ENCODE measurements at regions of chr12 and their contacts with region 1.

Region 1: GRCh38 chr12:14314801-14315200 is 50.7 kb upstream of the ATF7IP start:
- DNase-seq: no peak
- ATAC-seq: peak; percentile 69
- H3K4me3 Mint-ChIP-seq: peak overlapping the region; percentile 56
- H3K27ac Mint-ChIP-seq: peak overlapping the region; percentile 71
- H3K4me1 Mint-ChIP-seq: peaks cover 31% of the 10 kb centered on the region
- H3K27me3 Mint-ChIP-seq: no peaks in the 10 kb centered on the region
- CTCF ChIP-seq: no peak

Region 2: DNA sequence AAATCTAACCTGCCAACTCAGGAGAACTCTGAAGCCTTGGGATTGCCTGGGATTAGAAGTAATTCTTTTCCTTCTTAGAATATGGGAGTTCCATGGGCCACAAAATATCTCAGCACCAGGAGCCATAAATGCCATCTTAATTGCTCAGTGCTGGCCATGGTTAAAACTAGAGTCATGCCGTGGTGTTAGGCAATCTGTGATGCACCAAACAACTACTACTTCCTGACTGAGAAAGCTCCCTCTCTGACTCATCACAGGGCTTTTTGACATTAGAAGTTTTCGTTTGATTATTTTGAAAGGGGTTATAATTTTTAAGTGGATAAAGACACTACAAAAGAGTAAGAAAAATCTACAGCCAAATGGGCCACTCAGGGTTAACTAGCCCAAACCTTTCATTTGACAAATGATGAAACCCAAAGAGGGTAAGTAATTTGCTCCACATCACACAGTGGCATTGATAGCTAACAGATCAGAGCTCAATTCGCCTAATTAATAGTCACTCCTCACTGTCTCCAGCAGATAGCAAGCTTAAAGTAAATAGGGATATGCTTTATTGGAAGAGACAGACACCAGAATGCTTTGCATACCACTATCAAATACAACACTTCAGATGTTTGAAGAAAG is 741.0 kb before region 1 on chr12:
- CTCF ChIA-PET with region 1: no interaction called
- POLR2A ChIA-PET with region 1: no interaction called
- intact Hi-C with region 1: no loop called
- DNase-seq: no peak
- ATAC-seq: no peak
- H3K4me3 Mint-ChIP-seq: no peak overlapping the region
- H3K27ac Mint-ChIP-seq: no peak overlapping the region
- H3K4me1 Mint-ChIP-seq: no peaks in the 10 kb centered on the region
- H3K27me3 Mint-ChIP-seq: no peaks in the 10 kb centered on the region
- CTCF ChIP-seq: no peak

Region 3: DNA sequence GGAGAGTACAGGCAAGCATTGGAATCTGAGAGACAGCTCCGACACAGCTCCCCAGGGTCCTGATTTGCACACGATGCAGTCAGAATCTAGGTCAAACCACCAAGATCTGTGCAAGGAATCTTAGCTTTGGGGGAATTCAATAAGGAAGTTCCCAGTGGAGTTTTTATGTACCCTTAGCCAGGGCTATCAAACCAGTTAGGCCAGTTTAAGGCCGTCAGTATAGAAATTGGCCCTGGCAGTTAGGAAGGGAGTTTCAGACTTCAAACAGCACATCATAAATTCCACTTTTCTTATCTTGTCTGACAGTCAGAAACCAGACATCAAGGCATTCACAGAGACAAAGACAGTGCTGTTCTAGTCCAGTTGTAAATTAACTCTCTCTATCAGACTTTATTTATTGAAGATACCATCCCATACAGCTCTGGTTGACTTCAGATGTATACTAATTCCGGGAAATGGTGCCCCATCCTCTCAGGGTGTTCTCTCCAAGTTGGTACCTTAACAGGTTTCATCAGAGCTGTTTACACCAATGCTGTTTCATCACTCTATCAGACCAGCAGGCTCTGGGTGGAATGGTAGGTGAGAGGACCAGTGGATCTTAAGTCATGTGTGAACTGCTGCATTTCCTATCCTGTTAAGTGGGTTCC is 106.8 kb before region 1 on chr12:
- CTCF ChIA-PET with region 1: no interaction called
- POLR2A ChIA-PET with region 1: no interaction called
- intact Hi-C with region 1: no loop called
- DNase-seq: no peak
- ATAC-seq: no peak
- H3K4me3 Mint-ChIP-seq: no peak overlapping the region
- H3K27ac Mint-ChIP-seq: no peak overlapping the region
- H3K4me1 Mint-ChIP-seq: no peaks in the 10 kb centered on the region
- H3K27me3 Mint-ChIP-seq: no peaks in the 10 kb centered on the region
- CTCF ChIP-seq: no peak

Region 4: GRCh38 chr12:14272956-14273907 is 41.6 kb before region 1 on chr12:
- CTCF ChIA-PET with region 1: no interaction called
- POLR2A ChIA-PET with region 1: interaction called, 10 read pairs
- intact Hi-C with region 1: no loop called
- DNase-seq: no peak
- ATAC-seq: peak; percentile 68
- H3K4me3 Mint-ChIP-seq: peak overlapping the region; percentile 54
- H3K27ac Mint-ChIP-seq: peak overlapping the region; percentile 87
- H3K4me1 Mint-ChIP-seq: peaks cover 53% of the 10 kb centered on the region
- H3K27me3 Mint-ChIP-seq: no peaks in the 10 kb centered on the region
- CTCF ChIP-seq: no peak